Common myeloid progenitor, CD34-positive (primary cell): ENCODE measurements at regions of chr17 and their contacts with region 1.

Region 1: GRCh38 chr17:50560185-50560824 is at the start of gene CACNA1G:
- DNase-seq: peak; percentile 82 to 89 (median 86)
- H3K4me3 ChIP-seq: peak within 1 kb of the TSS in 6 of 7 experiments; percentile 28 to 72 (median 47)
- H3K27ac ChIP-seq: no peak within 1 kb of the TSS
- H3K4me1 ChIP-seq: peaks cover 0 to 44% (median 38%) of the 10 kb centered on the region in 4 experiments
- H3K27me3 ChIP-seq: peaks cover 0 to 83% (median 39%) of the 10 kb centered on the region in 5 experiments

Region 2: DNA sequence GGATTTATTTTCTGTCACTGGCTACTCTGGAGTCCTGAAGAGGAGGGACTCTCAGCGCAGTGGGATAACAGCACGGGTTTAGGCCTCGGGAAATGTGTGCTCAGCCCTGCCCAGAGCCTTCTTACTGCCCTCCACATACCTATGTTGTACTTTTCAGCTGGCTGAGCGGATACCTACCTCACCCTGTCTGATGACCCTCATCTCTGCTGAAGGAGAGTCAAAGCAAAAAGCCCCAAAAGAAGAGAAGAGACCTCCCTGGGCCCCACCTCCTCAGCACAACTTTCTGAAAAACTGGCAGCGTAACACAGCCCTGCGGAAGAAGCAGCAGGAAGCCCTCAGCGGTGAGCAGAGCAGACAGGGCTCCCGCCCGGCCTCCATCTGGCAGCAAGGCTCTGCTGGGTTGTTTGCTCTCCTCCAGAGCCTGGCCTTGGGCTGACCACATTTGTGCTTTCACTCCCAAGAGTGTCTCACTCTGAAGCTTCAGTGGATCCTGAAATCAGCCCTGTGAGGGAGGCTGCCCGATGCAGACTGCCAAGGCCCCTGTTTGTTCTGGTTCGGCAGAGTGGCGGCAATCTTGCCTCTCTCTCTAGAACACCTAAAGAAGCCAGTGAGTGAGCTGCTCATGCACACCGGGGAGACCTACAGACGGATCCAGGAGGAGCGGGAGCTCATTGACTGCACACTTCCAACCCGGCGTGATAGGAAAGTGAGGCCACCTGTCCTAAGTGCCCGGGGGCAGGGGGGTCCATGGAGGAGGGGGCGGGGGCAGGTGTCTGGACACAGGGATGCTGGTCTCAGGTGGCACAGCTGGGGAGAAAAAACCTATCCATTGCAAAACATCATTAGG is 41.7 kb before region 1 on chr17:
- CTCF ChIA-PET with region 1: no interaction called
- POLR2A ChIA-PET with region 1: no interaction called
- DNase-seq: no peak
- H3K4me3 ChIP-seq: no peak overlapping the region
- H3K27ac ChIP-seq: no peak overlapping the region
- H3K4me1 ChIP-seq: no peaks in the 10 kb centered on the region
- H3K27me3 ChIP-seq: peaks cover 0 to 2% (median 0%) of the 10 kb centered on the region in 5 experiments

Region 3: GRCh38 chr17:50547035-50547735 is 13.1 kb before region 1 on chr17 and contains the start of gene SPATA20:
- CTCF ChIA-PET with region 1: interaction called, 27 read pairs
- POLR2A ChIA-PET with region 1: no interaction called
- DNase-seq: peak; percentile 84 to 93 (median 87)
- H3K4me3 ChIP-seq: peak within 1 kb of the TSS; percentile 53 to 82 (median 67)
- H3K27ac ChIP-seq: peak within 1 kb of the TSS in 1 of 2 experiments; percentile 73
- H3K4me1 ChIP-seq: peaks cover 0 to 19% (median 11%) of the 10 kb centered on the region in 4 experiments
- H3K27me3 ChIP-seq: peaks cover 0 to 6% (median 0%) of the 10 kb centered on the region in 5 experiments

Region 4: GRCh38 chr17:50575581-50576210 is 15.4 kb after region 1 on chr17:
- CTCF ChIA-PET with region 1: interaction called, 13 read pairs
- POLR2A ChIA-PET with region 1: no interaction called
- DNase-seq: no peak
- H3K4me3 ChIP-seq: no peak overlapping the region
- H3K27ac ChIP-seq: no peak overlapping the region
- H3K4me1 ChIP-seq: peaks cover 0 to 2% (median 0%) of the 10 kb centered on the region in 4 experiments
- H3K27me3 ChIP-seq: peaks cover 0 to 9% (median 2%) of the 10 kb centered on the region in 5 experiments